ENCODE measurements at regions of chr22 and their contacts with region 1.

Region 1: GRCh38 chr22:29744902-29745301 is 21.9 kb downstream of the ZMAT5 start:
- DNase-seq: peak; percentile 93
- H3K4me3 ChIP-seq: no peak overlapping the region
- H3K27ac ChIP-seq: no peak overlapping the region
- H3K4me1 ChIP-seq: peaks cover 13% of the 10 kb centered on the region
- H3K27me3 ChIP-seq: no peaks in the 10 kb centered on the region
- CTCF ChIP-seq: no peak

Region 2: GRCh38 chr22:29663180-29663821 is 81.6 kb before region 1 on chr22:
- CTCF ChIA-PET with region 1: no interaction called
- dilution Hi-C with region 1: no loop called
- in situ Hi-C with region 1: no loop called
- intact Hi-C with region 1: no loop called
- DNase-seq: peak; percentile 55
- H3K4me3 ChIP-seq: no peak overlapping the region
- H3K27ac ChIP-seq: no peak overlapping the region
- H3K4me1 ChIP-seq: peaks cover 35% of the 10 kb centered on the region
- H3K27me3 ChIP-seq: no peaks in the 10 kb centered on the region
- CTCF ChIP-seq: no peak

Region 3: GRCh38 chr22:29758068-29758622 is 13.2 kb after region 1 on chr22:
- CTCF ChIA-PET with region 1: no interaction called
- dilution Hi-C with region 1: no loop called
- in situ Hi-C with region 1: no loop called
- intact Hi-C with region 1: loop called (anchors 1 kb)
- DNase-seq: no peak
- H3K4me3 ChIP-seq: no peak overlapping the region
- H3K27ac ChIP-seq: no peak overlapping the region
- H3K4me1 ChIP-seq: no peaks in the 10 kb centered on the region
- H3K27me3 ChIP-seq: no peaks in the 10 kb centered on the region
- CTCF ChIP-seq: no peak

Region 4: DNA sequence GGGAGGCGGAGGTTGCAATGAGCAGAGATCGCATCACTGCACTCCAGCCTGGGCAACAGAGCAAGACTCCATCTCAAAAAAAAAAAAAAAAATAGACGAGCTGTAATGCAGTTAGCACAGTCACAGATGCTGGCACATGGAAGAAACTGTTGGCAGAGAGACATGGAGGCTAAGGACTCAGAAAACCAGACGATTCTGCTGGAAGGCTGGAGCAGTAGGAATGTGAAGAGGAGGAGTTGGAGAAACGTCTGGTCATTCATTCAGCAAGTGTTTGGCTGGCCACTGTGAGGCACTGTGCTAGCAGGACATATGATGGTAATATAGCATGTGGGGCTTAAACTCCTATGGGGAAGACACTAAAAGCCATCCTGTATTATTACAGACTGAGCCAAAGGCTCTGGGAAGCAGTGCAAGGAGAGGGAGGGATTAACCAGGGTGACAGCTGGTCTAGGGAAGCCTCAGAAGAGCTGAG is 27.3 kb after region 1 on chr22:
- CTCF ChIA-PET with region 1: no interaction called
- dilution Hi-C with region 1: no loop called
- in situ Hi-C with region 1: no loop called
- intact Hi-C with region 1: no loop called
- DNase-seq: no peak
- H3K4me3 ChIP-seq: no peak overlapping the region
- H3K27ac ChIP-seq: no peak overlapping the region
- H3K4me1 ChIP-seq: peaks cover 16% of the 10 kb centered on the region
- H3K27me3 ChIP-seq: no peaks in the 10 kb centered on the region
- CTCF ChIP-seq: peak; percentile 53 to 58

Region 5: GRCh38 chr22:30127749-30128166 is 382.9 kb after region 1 on chr22:
- CTCF ChIA-PET with region 1: no interaction called
- dilution Hi-C with region 1: no loop called
- in situ Hi-C with region 1: no loop called
- intact Hi-C with region 1: no loop called
- DNase-seq: no peak
- H3K4me3 ChIP-seq: no peak overlapping the region
- H3K27ac ChIP-seq: no peak overlapping the region
- H3K4me1 ChIP-seq: no peaks in the 10 kb centered on the region
- H3K27me3 ChIP-seq: no peaks in the 10 kb centered on the region
- CTCF ChIP-seq: no peak